RWPE1 (cell line): ENCODE measurements at regions of chr17 and their contacts with region 1.

Region 1: DNA sequence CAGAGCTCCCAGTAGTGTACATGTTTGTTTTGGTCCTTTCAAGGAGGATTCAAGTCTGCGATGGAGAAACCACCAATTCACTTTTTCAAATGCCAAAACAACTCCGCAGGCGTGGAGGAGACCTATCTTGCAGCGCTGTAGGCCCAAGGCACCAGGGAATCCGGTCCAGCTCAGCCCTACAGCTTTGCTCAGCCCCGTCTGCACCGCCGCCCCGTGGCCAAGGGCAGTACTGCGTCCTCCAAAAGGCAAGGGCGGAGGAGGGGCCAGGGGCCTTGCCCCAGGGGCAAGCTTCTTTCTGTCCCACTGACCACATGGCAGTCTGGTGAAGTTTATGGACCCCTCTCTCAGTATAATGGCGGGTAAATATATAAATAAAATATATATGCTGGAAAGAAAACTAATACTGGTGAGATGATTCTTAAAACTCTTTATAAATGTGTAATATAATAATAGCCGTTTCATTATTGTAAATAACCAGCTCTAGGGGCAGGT is 709 bp upstream of the CD300LG start:
- DNase-seq: peak; percentile 82
- H3K27ac ChIP-seq: no peak overlapping the region
- CTCF ChIP-seq: peak; percentile 98

Region 2: DNA sequence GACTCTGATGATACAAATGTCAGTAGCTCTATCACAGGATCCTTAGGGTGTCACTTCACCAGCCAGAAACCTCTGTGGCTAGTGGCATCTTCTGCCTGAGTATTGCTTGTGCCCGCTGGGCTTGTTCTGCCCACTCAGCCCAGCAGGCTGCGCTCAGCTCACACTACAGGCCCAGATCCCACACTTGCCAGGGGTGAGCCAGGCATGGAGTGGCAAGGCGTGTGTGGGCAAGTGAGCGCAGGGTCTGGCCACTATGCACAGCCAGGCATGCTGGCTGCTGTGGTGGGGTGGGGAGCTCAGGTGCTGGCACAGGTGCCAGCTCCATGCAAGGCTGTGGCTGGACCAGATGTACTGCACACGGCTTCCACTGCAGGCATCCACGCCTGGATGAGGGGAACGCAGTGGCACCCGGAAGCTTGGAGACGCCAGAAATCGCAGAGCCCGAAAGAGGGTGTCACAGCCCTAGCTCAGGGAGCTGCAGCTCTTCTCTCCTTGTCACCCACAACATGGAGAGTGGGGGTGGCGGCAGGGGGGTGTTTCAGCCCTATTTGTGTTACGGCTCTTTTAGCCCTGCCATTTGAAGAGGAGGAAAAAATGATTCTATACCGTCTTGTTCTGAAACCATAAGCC is 55.8 kb before region 1 on chr17:
- CTCF ChIA-PET with region 1: interaction called, 10 read pairs
- POLR2A ChIA-PET with region 1: no interaction called
- DNase-seq: no peak
- H3K27ac ChIP-seq: peak overlapping the region; percentile 7; the same call in 1 of the 2 replicates
- CTCF ChIP-seq: peak; percentile 58

Region 3: DNA sequence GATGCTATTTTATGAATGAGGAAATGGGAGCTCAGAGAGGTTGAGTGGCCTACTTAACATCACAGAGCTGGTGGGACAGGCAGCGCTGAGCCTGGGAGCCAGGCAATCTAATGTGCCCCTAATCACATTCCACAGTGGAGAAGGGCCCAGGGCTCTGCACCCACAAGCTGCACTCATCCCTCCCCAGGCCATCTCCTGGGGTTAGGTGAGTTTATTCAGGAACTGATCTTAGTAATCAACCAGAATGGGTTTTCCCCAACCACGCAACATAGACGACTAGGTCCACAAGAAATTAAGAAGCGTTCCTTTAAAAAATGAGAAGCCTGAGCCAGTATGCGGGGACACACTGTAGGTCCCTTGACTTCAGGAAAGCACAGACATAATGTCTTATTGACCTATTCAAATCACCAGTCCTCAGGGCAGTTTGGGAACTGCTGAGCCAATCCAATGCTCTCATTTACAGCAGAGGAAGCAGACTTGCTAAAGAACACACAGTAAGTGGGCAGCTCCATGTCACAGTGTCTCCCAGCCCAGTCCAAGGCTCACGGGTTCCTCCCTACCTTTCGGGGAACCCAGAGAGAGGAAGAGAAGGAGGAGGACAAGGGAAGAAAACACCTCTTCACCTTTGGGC is 15.6 kb before region 1 on chr17:
- CTCF ChIA-PET with region 1: interaction called, 14 read pairs
- POLR2A ChIA-PET with region 1: no interaction called
- DNase-seq: no peak
- H3K27ac ChIP-seq: peak overlapping the region; percentile 70; the same call in 1 of the 2 replicates
- CTCF ChIP-seq: no peak

Region 4: GRCh38 chr17:43857942-43858600 is 11.8 kb after region 1 on chr17:
- CTCF ChIA-PET with region 1: interaction called, 17 read pairs
- POLR2A ChIA-PET with region 1: no interaction called
- DNase-seq: no peak
- H3K27ac ChIP-seq: no peak overlapping the region
- CTCF ChIP-seq: no peak

Region 5: DNA sequence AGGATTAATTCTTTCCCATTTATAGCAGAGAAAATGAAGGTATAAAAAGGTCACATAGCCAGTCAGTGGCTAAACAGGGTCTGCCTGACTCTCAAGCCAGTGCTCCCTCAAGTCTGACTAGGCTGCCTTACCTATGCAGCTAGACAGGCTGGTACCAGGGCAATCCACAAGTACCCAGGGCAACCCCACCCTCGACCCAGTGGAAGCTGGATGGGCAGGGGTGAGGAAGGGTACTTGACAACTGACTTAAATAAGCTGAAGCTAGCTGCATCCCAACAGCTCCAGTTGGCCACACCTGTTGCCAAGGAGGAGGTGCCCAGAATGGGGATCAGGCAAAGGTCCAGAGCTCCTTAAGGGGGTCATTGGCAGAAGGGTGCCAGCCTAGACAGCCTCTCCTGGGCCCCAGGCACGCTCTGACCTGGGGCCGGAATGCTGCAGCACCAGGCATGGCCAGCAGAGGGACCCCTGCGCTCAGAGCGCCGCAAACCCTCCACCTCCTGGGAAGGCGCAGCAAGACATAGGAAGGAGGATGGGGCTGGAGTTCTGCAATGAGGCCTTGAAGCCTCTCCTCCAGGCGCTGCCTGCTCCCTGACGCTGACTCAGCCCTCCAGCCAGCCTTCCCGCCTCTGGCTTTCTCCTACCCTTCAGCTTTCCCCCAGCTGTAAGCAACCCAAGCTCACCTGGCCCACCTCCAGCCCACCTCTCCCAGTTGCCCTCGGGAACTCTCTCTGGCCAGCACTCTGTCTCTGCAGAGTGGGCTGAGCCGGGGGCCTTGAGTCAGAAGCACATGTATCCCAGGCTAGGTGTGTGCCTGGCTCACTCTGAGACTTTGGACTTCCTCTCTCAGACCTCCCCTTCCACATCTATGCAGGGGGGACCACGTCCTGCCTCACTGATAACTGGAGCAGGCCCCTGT is 32.3 kb after region 1 on chr17:
- CTCF ChIA-PET with region 1: interaction called, 10 read pairs
- POLR2A ChIA-PET with region 1: no interaction called
- DNase-seq: peak; percentile 91
- H3K27ac ChIP-seq: peak overlapping the region; percentile 57
- CTCF ChIP-seq: peak; percentile 98

Region 6: GRCh38 chr17:43966271-43966670 is 120.0 kb after region 1 on chr17:
- CTCF ChIA-PET with region 1: no interaction called
- POLR2A ChIA-PET with region 1: no interaction called
- DNase-seq: no peak
- H3K27ac ChIP-seq: no peak overlapping the region
- CTCF ChIP-seq: no peak